ENCODE measurements at regions of chr18 and their contacts with region 1.

Region 1: GRCh38 chr18:24413148-24413547 is 13.3 kb upstream of the IMPACT start:
- DNase-seq: no peak
- H3K4me3 Mint-ChIP-seq: no peak overlapping the region
- H3K27ac Mint-ChIP-seq: no peak overlapping the region
- H3K4me1 Mint-ChIP-seq: peaks cover 26% of the 10 kb centered on the region
- H3K27me3 Mint-ChIP-seq: peaks cover 41% of the 10 kb centered on the region

Region 2: GRCh38 chr18:23756590-23757436 is 656.3 kb before region 1 on chr18:
- intact Hi-C with region 1: no loop called
- DNase-seq: no peak
- H3K4me3 Mint-ChIP-seq: no peak overlapping the region
- H3K27ac Mint-ChIP-seq: no peak overlapping the region
- H3K4me1 Mint-ChIP-seq: no peaks in the 10 kb centered on the region
- H3K27me3 Mint-ChIP-seq: peaks cover 3% of the 10 kb centered on the region

Region 3: DNA sequence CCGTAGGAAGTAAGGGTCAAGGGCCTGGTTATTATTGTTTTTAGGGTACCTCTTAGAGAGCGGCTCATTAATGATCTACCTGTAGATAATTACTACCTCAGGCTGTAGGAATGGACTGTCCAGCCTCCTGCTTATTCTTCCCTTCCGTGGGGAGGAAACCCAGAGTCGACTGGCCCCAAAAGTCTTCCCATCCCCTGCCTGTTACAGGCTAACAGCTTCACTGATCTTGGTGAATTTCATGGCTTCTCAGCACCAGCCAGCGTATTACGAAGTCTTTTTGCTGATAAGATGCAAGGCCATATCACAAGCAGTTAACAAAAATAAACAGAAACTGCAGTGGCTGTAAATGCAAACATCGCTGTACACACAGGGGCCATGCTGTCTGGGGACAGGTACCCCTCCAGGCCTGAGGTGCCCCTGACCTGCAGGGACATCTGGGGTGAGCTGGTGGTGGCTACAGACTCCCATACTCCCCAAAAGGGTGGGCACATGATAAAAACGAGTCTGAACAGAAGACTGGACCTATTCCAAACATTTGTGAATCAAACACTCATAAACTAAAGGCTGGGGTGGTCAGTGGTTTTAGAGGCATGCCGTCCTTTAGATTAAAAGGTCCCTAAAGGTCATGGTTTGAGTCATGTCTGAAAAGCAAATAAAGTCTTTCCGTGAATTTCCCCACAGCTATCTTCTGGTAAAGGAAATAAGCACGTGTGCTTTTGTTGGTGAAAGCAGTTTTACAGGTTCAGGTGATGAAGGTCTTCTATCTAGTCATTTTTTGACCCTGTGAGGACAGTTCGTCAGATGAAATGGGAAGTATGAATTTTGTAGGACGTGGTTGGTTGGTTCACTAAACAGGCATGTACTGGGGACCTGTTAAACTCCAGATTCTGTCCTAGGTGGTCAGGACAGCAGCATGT is 361.9 kb before region 1 on chr18:
- intact Hi-C with region 1: loop called (anchors 10 kb)
- DNase-seq: no peak
- H3K4me3 Mint-ChIP-seq: peak overlapping the region; percentile 33
- H3K27ac Mint-ChIP-seq: peak overlapping the region; percentile 80
- H3K4me1 Mint-ChIP-seq: peaks cover 62% of the 10 kb centered on the region
- H3K27me3 Mint-ChIP-seq: no peaks in the 10 kb centered on the region

Region 4: DNA sequence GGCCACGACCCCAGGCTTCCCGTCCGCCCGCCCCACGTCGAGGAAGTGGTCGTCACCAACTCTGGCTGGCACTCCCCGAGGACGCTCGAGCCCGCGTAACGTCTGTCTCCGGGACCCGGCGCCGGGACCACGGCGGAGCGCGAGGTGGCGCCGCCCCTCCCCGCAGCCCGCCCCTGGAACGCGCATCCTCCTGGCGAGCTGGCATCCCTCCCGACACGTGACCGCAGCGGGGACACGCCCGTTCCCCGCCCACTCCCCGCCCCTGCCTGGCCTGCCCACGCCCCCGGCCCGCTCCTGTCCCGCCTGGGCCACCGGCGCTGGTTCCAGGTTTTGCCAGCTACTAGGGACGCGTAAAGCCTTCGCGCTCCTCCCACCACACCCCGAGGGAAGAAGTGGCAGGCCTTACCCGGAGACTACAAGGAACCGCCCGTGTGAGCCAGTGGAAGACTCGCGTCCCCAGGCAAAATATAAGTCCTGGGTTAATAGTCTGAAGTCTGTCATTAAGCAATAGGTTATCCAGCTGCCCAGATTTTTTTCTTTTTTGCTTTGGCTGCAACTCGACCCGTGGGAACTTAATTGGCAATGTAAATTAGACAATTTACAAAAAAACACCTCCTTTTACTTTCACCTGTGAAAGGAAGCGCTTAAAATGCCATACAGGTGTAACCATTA is 15.3 kb before region 1 on chr18 and contains the start of gene OSBPL1A:
- intact Hi-C with region 1: loop called (anchors 2 kb)
- DNase-seq: peak; percentile 52
- H3K4me3 Mint-ChIP-seq: peak within 1 kb of the TSS; percentile 76
- H3K27ac Mint-ChIP-seq: no peak within 1 kb of the TSS
- H3K4me1 Mint-ChIP-seq: peaks cover 20% of the 10 kb centered on the region
- H3K27me3 Mint-ChIP-seq: peaks cover 60% of the 10 kb centered on the region
- total RNA-seq, gene OSBPL1A: 0.39 and 0.98 TPM in 2 replicates

Region 5: DNA sequence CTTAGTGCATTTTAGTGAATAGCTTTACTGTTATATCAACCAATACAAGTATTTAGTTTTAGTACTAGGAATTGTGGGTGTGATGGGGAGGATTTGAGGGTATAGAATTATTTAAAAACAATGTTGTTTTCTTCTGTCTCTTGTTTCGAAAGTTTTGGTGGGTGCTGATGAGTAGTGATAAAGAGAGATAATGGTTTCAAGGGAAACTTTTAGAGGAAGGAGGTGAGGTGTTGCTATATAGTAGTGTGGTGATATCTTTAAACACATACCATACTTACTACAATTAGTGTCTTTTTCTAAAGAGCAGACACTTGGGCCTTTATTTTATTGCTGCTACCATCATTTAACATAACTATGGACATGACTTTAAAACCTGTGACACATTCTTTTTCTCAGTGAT is 23.8 kb after region 1 on chr18:
- intact Hi-C with region 1: loop called (anchors 1 kb)
- DNase-seq: no peak
- H3K4me3 Mint-ChIP-seq: no peak overlapping the region
- H3K27ac Mint-ChIP-seq: peak overlapping the region; percentile 4
- H3K4me1 Mint-ChIP-seq: peaks cover 21% of the 10 kb centered on the region
- H3K27me3 Mint-ChIP-seq: peaks cover 2% of the 10 kb centered on the region

Region 6: DNA sequence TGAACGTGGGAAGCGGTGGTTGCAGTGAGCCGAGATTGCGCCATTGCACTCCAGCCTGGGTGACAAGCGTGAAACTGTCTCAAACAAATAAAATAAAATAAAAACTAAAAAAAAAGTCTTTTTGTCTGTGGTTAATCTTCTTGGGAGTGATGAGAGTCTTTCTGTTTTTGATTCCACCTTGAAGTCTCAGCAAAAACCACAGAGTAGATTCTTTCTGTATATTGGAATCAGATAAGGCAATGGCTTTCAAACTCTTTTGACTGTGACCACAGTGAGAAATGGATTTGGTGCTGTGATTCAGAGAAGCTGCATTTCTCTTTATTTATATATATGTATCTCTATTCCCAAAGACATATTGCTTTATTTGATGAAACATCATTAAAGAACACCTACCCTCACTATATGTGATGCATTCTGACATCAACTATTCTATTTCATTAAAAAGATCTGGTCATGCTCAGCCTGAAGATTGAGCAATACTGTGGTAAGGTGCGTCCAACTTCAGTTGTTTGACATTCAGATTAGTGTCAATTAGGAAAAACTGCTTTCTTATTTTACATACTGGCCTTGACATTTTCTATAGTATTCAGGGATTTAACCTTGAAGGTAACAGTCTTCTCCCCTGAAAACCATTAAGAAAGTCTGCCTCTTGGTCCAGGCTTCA is 62.9 kb after region 1 on chr18:
- intact Hi-C with region 1: loop called (anchors 1 kb)
- DNase-seq: no peak
- H3K4me3 Mint-ChIP-seq: no peak overlapping the region
- H3K27ac Mint-ChIP-seq: no peak overlapping the region
- H3K4me1 Mint-ChIP-seq: peaks cover 12% of the 10 kb centered on the region
- H3K27me3 Mint-ChIP-seq: peaks cover 65% of the 10 kb centered on the region

Measured in activated T-helper 2 cell treated with anti-CD3 and anti-CD28 coated beads, Interferon-gamma antibody, Interleukin-2, Interleukin-4, amounts not matched to agents 10 μg/mL and 5 μg/mL and 100 μg/mL, durations not matched to agents 14 hours and 24 hours and 36 hours (primary cell).